RWPE1 (cell line): ENCODE measurements at regions of chr1 and their contacts with region 1.

Region 1: DNA sequence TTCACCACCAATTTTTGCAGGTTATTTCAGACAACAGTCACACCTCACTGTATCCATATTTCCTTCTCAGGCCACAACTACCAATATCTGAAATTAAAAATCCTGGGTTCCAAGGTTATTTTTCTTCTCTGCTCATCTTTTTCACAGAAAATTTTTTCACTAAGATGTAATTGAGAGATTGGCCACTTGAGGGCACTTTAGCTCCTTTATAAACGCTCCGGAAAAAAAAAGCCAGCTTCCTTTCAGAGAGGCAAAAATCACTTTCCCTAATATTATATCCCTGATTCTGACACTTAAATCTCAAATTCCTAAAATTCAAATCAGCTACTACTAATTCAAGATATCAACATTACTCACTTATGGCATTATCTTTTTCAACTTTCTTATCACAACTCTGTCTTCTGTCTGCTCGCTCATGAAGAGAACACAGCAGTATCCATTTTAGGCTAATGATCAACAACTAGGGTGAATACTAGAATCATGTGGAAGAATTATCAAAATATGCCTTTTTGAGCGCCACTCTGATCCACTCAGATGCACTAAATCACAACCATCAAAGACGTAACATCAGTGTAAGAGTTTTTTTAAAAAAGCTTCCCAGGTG is 101.4 kb upstream of the RGS1 start:
- DNase-seq: peak; percentile 29
- H3K27ac ChIP-seq: no peak overlapping the region
- CTCF ChIP-seq: peak; percentile 64

Region 2: DNA sequence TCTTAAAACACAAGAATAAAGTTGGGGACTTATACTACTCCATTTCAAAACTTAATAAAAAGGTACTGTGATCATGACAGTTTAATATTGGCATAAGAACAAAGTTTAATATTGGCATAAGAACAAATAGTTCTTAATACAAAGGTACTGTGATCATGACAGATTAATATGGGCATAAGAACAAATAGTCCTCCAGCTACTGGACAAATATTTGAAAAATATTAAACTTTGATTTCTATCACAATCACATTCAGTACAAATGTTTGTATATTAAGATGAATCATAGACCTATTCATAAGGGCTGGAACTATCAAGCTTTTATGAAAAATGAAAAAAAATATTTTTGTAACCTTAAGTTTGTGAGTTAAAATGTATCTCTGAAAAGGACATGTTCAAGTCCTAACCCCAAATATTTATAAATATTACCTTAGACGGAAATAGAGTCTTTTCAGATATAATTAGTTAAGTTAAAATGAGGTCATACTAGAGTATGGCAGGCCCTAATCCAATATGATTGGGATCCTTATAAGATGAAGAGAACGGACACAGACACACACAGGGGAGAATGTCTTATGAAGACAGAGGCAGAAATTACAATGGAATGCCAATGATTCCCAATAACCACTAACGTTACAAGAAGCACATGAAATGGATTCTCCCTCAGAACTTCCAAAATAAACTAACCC is 22.3 kb after region 1 on chr1:
- CTCF ChIA-PET with region 1: no interaction called
- POLR2A ChIA-PET with region 1: no interaction called
- DNase-seq: no peak
- H3K27ac ChIP-seq: no peak overlapping the region
- CTCF ChIP-seq: no peak

Region 3: DNA sequence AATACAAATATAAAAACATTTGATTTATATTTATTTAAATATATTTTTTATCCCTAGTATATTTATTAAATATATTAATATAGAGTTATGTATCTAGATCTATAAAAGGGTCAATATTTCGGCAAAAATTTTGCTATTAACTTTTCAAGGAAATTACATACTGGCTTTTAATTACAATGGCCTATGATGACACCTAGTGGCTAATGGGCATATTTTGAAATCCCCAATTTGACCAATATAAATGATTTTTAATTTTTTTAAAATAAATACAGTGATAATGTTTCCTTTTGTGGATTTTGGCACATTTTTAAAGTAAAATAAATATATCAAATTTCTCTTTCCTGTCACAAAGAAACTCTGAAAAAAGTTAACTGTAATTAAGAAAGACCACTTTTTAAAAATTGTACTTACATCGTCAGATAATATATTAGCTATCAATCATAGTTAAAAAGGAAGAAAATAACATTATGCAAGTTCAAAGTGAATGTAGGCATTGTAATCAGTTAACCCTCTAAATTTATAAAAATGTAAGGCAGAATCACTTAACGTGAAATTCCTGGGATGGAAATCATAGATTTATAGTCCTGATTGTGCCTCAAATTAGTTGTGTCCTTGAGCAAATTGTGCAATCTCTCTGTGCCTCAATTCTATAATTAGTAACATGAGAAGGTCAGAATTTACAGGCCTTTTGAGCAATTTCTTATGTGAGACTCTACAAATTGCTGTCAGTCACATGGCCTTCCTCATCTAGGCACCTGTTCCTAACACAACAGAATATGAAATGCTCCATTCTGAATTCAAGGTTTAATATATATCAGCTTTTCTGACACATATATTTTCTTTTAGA is 136.2 kb after region 1 on chr1:
- CTCF ChIA-PET with region 1: interaction called, 12 read pairs
- POLR2A ChIA-PET with region 1: no interaction called
- DNase-seq: peak; percentile 31
- H3K27ac ChIP-seq: no peak overlapping the region
- CTCF ChIP-seq: peak; percentile 43; the same call in 1 of the 2 replicates